Kidney (tissue), 22 donors: ENCODE measurements at regions of chr6 and their contacts with region 1.

Region 1: GRCh38 chr6:31079656-31080261 is 32.6 kb downstream of the C6orf15 start:
- DNase-seq: peak in 4 of 5 donors; percentile 76 to 86 (median 80)
- H3K4me3 ChIP-seq: no peak overlapping the region
- H3K27ac ChIP-seq: no peak overlapping the region
- H3K4me1 ChIP-seq: peaks cover 0 to 2% (median 0%) of the 10 kb centered on the region in 3 donors
- H3K27me3 ChIP-seq: no peaks in the 10 kb centered on the region
- CTCF ChIP-seq: peak; percentile 68

Region 2: GRCh38 chr6:30793521-30794194 is 286.1 kb before region 1 on chr6:
- intact Hi-C with region 1: no loop called
- DNase-seq: peak in 2 of 5 donors; percentile 43 to 64
- H3K4me3 ChIP-seq: no peak overlapping the region
- H3K27ac ChIP-seq: peak overlapping the region in 1 of 2 donors; percentile 51
- H3K4me1 ChIP-seq: peaks cover 0 to 9% (median 2%) of the 10 kb centered on the region in 3 donors
- H3K27me3 ChIP-seq: no peaks in the 10 kb centered on the region
- CTCF ChIP-seq: no peak

Region 3: GRCh38 chr6:30914076-30914853 is 165.5 kb before region 1 on chr6 and contains the start of gene VARS2:
- intact Hi-C with region 1: loop called (anchors 10 kb)
- DNase-seq: peak; percentile 96 to 98 (median 97)
- H3K4me3 ChIP-seq: peak within 1 kb of the TSS; percentile 57 to 76 (median 67)
- H3K27ac ChIP-seq: peak within 1 kb of the TSS; percentile 87 to 93
- H3K4me1 ChIP-seq: peaks cover 0 to 31% (median 23%) of the 10 kb centered on the region in 3 donors
- H3K27me3 ChIP-seq: no peaks in the 10 kb centered on the region
- CTCF ChIP-seq: peak; percentile 24
- total RNA-seq, gene VARS2: 34.5 TPM